Pancreas (tissue), 10 donors: ENCODE measurements at regions of chr1 and their contacts with region 1.

Region 1: GRCh38 chr1:239511870-239512269 is 125.5 kb downstream of the CHRM3 start:
- DNase-seq: no peak
- ATAC-seq: no peak
- H3K4me3 ChIP-seq: no peak overlapping the region
- H3K27ac ChIP-seq: no peak overlapping the region
- H3K4me1 ChIP-seq: no peaks in the 10 kb centered on the region
- H3K27me3 ChIP-seq: no peaks in the 10 kb centered on the region
- CTCF ChIP-seq: no peak

Region 2: DNA sequence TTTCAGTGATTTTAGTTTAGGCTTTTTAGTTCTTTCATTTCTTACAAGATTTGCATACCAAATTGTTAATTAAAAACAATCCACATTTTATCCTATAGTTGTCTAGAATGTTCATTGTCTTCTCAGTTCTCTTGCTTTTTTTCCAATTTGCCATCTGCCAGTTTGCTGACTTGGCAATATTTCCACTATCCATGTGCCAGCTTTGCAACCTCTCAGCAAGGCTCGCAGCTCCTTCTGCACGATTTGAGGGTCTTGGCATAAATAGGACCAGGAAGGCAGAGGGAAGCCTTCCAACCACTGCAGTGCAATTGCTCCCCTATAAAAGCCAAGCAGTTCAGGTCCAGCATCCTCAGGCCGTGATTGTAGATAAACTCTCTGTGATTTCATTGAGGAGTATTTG is 273.0 kb after region 1 on chr1:
- intact Hi-C with region 1: loop called in 1 of 3 experiments (anchors 5 kb)
- DNase-seq: no peak
- ATAC-seq: no peak
- H3K4me3 ChIP-seq: no peak overlapping the region
- H3K27ac ChIP-seq: no peak overlapping the region
- H3K4me1 ChIP-seq: no peaks in the 10 kb centered on the region
- H3K27me3 ChIP-seq: no peaks in the 10 kb centered on the region
- CTCF ChIP-seq: no peak